ENCODE measurements at regions of chr1 and their contacts with region 1.

Region 1: GRCh38 chr1:208238710-208239472 is 5.3 kb downstream of the PLXNA2 start:
- DNase-seq: no peak
- H3K4me3 ChIP-seq: no peak overlapping the region; a peak in 1 of 8 replicates
- H3K27ac ChIP-seq: no peak overlapping the region
- H3K4me1 ChIP-seq: peaks cover 6 to 17% (median 11%) of the 10 kb centered on the region in 4 experiments
- H3K27me3 ChIP-seq: peaks cover 16 to 33% (median 28%) of the 10 kb centered on the region in 4 experiments
- CTCF ChIP-seq: peak; percentile 48 to 65 (median 59)
- EP300 ChIP-seq: no peak
- POLR2A ChIP-seq: no peak
- RAD21 ChIP-seq: peak; percentile 53 to 63

Region 2: GRCh38 chr1:208149776-208150514 is 88.9 kb before region 1 on chr1:
- CTCF ChIA-PET with region 1: interaction called, 11 read pairs
- POLR2A ChIA-PET with region 1: no interaction called
- DNase-seq: no peak
- H3K4me3 ChIP-seq: no peak overlapping the region
- H3K27ac ChIP-seq: no peak overlapping the region
- H3K4me1 ChIP-seq: peaks cover 0 to 15% (median 5%) of the 10 kb centered on the region in 4 experiments; a peak in 4 of 7 replicates
- H3K27me3 ChIP-seq: no peaks in the 10 kb centered on the region
- CTCF ChIP-seq: no peak
- EP300 ChIP-seq: no peak
- POLR2A ChIP-seq: no peak
- RAD21 ChIP-seq: no peak

Region 3: GRCh38 chr1:208177656-208178055 is 61.2 kb before region 1 on chr1:
- CTCF ChIA-PET with region 1: interaction called, 16 read pairs
- POLR2A ChIA-PET with region 1: no interaction called
- DNase-seq: no peak
- H3K4me3 ChIP-seq: no peak overlapping the region
- H3K27ac ChIP-seq: no peak overlapping the region
- H3K4me1 ChIP-seq: peaks cover 11 to 29% (median 14%) of the 10 kb centered on the region in 4 experiments
- H3K27me3 ChIP-seq: no peaks in the 10 kb centered on the region; a peak in 2 of 7 replicates
- CTCF ChIP-seq: no peak
- EP300 ChIP-seq: no peak
- POLR2A ChIP-seq: no peak
- RAD21 ChIP-seq: no peak

Region 4: GRCh38 chr1:208211921-208212843 is 26.7 kb before region 1 on chr1:
- CTCF ChIA-PET with region 1: interaction called, 22 read pairs
- POLR2A ChIA-PET with region 1: no interaction called
- DNase-seq: no peak
- H3K4me3 ChIP-seq: no peak overlapping the region
- H3K27ac ChIP-seq: no peak overlapping the region
- H3K4me1 ChIP-seq: peaks cover 0 to 2% (median 0%) of the 10 kb centered on the region in 4 experiments; a peak in 1 of 7 replicates
- H3K27me3 ChIP-seq: no peaks in the 10 kb centered on the region
- CTCF ChIP-seq: no peak
- EP300 ChIP-seq: no peak
- POLR2A ChIP-seq: no peak
- RAD21 ChIP-seq: no peak

Region 5: DNA sequence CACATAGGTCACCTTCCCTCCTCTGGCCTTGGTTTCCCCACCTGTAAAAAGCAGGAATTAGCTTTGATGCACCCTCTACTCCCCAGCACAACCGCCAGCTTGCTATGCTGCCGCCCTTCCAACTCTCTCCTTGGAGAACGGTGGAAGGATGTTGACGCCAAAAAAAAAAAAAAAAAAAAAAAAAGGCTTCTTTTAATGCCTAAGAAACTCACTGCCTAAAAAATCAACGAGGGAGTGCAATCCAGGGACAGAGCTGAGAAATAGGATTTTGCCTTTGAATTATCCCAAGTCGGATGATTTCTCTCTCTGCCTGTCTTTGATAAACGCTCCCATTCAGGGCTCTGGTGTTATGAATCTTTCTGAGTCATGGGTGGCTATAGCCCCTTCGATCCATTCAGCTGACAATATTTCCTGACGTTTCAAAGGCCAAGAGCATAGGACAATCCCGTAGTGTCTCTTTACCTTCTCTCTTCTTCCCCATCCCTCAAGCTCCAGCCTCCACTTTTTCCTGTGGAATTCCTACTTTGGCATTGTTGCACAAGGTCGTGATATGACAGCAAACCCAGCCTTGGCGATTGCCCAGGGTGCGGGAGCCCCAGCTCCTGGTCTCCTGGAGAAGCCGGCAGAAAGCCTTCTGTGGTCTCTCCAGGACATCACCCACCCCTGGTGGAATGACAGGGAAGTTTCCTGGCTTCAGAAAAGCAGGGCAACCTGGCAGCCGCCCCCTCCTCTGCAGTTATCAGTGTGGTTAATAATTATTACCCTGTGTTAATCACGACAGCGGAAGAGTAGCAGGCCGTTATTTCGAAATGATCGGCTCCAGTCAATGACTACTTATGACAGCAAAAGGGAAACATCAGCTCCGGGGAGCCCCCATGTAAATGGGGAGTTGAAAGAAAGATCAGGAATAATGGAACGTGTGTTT is 13.3 kb after region 1 on chr1:
- CTCF ChIA-PET with region 1: interaction called, 17 read pairs
- POLR2A ChIA-PET with region 1: no interaction called
- DNase-seq: peak in 1 of 2 experiments; percentile 84
- H3K4me3 ChIP-seq: peak overlapping the region in 1 of 4 experiments; percentile 22; a peak in 1 of 8 replicates
- H3K27ac ChIP-seq: no peak overlapping the region
- H3K4me1 ChIP-seq: peaks cover 0 to 7% (median under 1%) of the 10 kb centered on the region in 4 experiments; a peak in 5 of 7 replicates
- H3K27me3 ChIP-seq: peaks cover 3 to 15% (median 13%) of the 10 kb centered on the region in 4 experiments; a peak in 6 of 7 replicates
- CTCF ChIP-seq: peak; percentile 63 to 72 (median 69)
- EP300 ChIP-seq: no peak
- POLR2A ChIP-seq: no peak
- RAD21 ChIP-seq: peak; percentile 66 to 82

Measured in H1 (cell line).